ENCODE measurements at regions of chr5 and their contacts with region 1.

Region 1: GRCh38 chr5:57442080-57442839 is 40.4 kb downstream of the ACTBL2 start:
- DNase-seq: peak; percentile 87
- H3K4me3 ChIP-seq: no peak overlapping the region
- CTCF ChIP-seq: no peak

Region 2: DNA sequence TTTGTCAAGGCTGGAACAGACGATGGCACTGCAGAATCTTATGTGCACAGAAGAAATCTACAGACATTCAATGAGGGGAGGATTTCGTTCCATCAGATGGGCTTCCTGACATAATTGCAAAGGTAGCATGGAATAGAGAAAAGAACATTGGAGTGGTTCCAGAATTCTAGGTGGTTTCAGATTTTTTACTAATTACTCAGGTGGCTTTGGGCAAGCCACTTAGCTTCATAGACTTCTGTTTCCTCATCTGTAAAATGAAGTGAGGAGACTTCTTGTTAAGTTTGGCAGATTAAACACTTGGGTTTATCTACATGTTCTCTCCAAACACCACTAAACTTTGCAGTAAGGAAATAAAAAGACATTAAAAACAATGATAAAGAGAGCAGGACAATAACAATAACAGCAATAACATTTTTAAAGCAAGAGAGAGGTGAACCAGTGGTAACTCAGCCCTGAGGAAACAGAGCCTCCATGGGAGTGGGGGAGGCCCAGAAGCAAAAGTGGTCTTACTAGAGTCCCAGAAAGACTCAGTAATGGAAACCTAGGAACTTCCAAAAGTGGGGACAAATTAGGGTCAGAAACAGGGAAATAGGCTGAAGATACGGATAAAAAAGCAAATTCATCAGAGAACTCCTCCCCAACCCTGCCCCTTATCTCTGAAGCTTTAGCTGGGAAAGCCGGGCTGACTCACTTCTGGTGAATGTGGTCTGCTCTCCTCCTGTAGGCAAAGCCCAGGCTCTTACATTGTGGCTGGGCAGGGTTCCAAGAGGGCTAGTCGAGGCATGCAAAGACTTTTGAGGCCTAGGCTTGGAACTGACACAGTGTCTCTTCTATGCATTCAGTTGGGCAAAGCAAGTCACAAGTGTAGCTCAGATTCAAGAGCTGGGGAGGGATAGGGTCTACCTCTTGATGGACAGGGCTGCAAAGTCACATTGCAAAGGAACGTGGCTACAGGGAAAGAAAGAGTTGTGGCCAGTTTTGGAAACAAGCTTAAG is 52.1 kb after region 1 on chr5:
- CTCF ChIA-PET with region 1: interaction called, 5 read pairs
- POLR2A ChIA-PET with region 1: interaction called, 12 read pairs
- DNase-seq: peak; percentile 94
- H3K4me3 ChIP-seq: no peak overlapping the region
- CTCF ChIP-seq: no peak